Calu3 (cell line): ENCODE measurements at regions of chr2 and their contacts with region 1.

Region 1: GRCh38 chr2:66872081-66872985 is 437.4 kb downstream of the MEIS1 start:
- DNase-seq: peak; percentile 24
- H3K4me3 Mint-ChIP-seq: peak overlapping the region; percentile 55
- H3K27ac Mint-ChIP-seq: peak overlapping the region; percentile 84
- H3K4me1 Mint-ChIP-seq: peaks cover 47% of the 10 kb centered on the region
- H3K27me3 Mint-ChIP-seq: no peaks in the 10 kb centered on the region
- CTCF ChIP-seq: no peak

Region 2: GRCh38 chr2:66824926-66825325 is 47.4 kb before region 1 on chr2:
- CTCF ChIA-PET with region 1: no interaction called
- intact Hi-C with region 1: loop called (anchors 1 kb)
- DNase-seq: peak; percentile 24
- H3K4me3 Mint-ChIP-seq: no peak overlapping the region
- H3K27ac Mint-ChIP-seq: no peak overlapping the region
- H3K4me1 Mint-ChIP-seq: no peaks in the 10 kb centered on the region
- H3K27me3 Mint-ChIP-seq: no peaks in the 10 kb centered on the region
- CTCF ChIP-seq: no peak

Region 3: GRCh38 chr2:66929632-66930338 is 57.5 kb after region 1 on chr2:
- CTCF ChIA-PET with region 1: interaction called, 3 read pairs
- intact Hi-C with region 1: loop called (anchors 5 kb)
- DNase-seq: peak; percentile 82
- H3K4me3 Mint-ChIP-seq: peak overlapping the region; percentile 52
- H3K27ac Mint-ChIP-seq: peak overlapping the region; percentile 84
- H3K4me1 Mint-ChIP-seq: peaks cover 37% of the 10 kb centered on the region
- H3K27me3 Mint-ChIP-seq: no peaks in the 10 kb centered on the region
- CTCF ChIP-seq: no peak